Mammary epithelial cell (primary cell): ENCODE measurements at regions of chr4 and their contacts with region 1.

Region 1: DNA sequence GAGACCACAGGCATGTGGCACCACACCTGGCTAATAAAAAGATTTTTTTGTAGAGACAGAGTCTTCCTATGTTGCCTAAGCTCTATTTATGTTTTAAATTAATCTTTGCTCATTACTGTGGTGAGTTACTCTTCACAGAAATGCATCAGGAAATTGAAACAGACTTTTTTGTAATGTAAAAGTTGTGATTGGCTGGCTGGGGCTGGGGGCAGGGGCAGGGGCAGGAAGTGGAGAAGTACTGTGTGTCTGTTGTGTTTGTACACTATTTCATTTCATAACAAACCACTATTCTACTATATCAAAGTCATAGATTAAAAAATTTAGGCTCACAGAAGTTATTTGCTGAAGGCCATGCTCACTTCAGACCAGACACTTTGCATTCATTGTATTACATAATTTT is 19.1 kb upstream of the ABRAXAS1 start:
- DNase-seq: no peak
- H3K4me3 ChIP-seq: no peak overlapping the region
- H3K27ac ChIP-seq: no peak overlapping the region
- H3K4me1 ChIP-seq: no peaks in the 10 kb centered on the region
- H3K27me3 ChIP-seq: no peaks in the 10 kb centered on the region
- CTCF ChIP-seq: no peak

Region 2: DNA sequence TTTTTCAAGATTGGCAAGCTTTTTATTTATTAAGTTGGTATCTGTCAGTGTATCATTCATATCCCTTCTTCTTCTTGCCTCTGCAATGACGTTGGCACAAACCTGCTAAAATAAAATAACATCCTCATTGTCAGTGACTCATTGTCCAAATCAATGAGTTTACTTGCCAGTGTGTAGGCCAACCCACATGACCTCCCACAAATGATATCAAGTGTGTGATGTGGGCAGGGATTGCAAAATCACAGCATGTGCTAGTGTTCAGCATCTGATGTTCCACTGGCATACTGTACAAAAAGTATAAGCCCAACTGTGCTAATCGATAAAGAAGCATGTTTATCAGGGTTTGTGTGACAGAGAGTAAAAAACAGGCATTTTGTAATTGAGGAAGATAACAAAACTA is 57.4 kb after region 1 on chr4:
- CTCF ChIA-PET with region 1: no interaction called
- dilution Hi-C with region 1: loop called (anchors 10 kb)
- in situ Hi-C with region 1: no loop called
- intact Hi-C with region 1: no loop called
- DNase-seq: peak; percentile 90
- H3K4me3 ChIP-seq: no peak overlapping the region
- H3K27ac ChIP-seq: no peak overlapping the region
- H3K4me1 ChIP-seq: peaks cover 28% of the 10 kb centered on the region
- H3K27me3 ChIP-seq: no peaks in the 10 kb centered on the region
- CTCF ChIP-seq: no peak

Region 3: GRCh38 chr4:83582289-83582769 is 78.4 kb after region 1 on chr4:
- CTCF ChIA-PET with region 1: no interaction called
- dilution Hi-C with region 1: no loop called
- in situ Hi-C with region 1: no loop called
- intact Hi-C with region 1: loop called (anchors 1 kb)
- DNase-seq: peak; percentile 72
- H3K4me3 ChIP-seq: no peak overlapping the region
- H3K27ac ChIP-seq: no peak overlapping the region
- H3K4me1 ChIP-seq: peaks cover 10% of the 10 kb centered on the region
- H3K27me3 ChIP-seq: no peaks in the 10 kb centered on the region
- CTCF ChIP-seq: peak; percentile 1 to 42

Region 4: DNA sequence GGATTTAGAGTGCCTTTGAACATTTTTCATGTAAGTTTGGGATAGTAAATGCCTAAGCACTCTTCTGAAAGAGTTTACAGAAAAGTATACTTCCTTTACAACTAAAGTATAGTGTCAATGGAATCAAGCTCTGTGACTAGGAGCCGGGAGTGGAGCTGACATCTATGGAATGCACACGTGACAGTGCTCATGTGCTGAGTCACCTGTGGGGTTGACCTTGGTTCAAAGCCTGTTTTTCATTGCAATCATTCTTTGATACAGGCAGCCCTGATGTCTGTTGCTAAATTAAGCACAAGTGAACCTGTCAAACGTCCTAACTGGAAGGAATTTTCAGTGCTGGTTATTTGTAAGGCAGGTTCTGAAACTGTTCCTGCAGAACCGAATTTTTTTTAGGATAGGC is 114.5 kb after region 1 on chr4:
- CTCF ChIA-PET with region 1: no interaction called
- dilution Hi-C with region 1: no loop called
- in situ Hi-C with region 1: no loop called
- intact Hi-C with region 1: no loop called
- DNase-seq: peak; percentile 71
- H3K4me3 ChIP-seq: no peak overlapping the region
- H3K27ac ChIP-seq: peak overlapping the region; percentile 13
- H3K4me1 ChIP-seq: peaks cover 23% of the 10 kb centered on the region
- H3K27me3 ChIP-seq: no peaks in the 10 kb centered on the region
- CTCF ChIP-seq: no peak

Region 5: DNA sequence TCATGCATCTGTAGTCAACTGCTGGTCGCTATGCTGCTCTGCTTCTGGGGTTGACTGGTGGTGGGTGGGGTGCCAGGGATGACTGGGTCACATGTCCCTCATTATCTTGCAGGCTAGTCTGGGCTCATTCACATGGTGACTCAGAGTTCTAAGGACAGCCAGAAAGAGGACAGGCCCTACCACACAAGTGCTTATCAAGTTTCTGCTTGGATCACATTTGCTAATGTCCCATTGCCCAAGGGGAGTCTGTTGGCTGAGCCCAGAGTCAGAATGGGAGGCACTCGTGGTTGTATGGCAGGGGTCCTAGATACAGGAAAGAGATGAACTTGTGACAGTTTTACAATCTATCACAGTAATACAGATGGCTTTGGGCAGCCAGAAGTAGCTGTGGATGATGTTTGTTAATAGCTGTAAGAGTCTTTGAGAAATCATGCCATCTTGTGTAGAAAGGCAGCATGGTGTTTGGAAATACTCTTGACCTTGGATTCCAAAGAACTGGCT is 253.2 kb after region 1 on chr4:
- CTCF ChIA-PET with region 1: no interaction called
- dilution Hi-C with region 1: no loop called
- in situ Hi-C with region 1: loop called in 1 of 2 experiments (anchors 25 kb)
- intact Hi-C with region 1: loop called (anchors 5 kb)
- DNase-seq: peak; percentile 64
- H3K4me3 ChIP-seq: no peak overlapping the region
- H3K27ac ChIP-seq: no peak overlapping the region
- H3K4me1 ChIP-seq: peaks cover 8% of the 10 kb centered on the region
- H3K27me3 ChIP-seq: no peaks in the 10 kb centered on the region
- CTCF ChIP-seq: no peak